ENCODE measurements at regions of chr12 and their contacts with region 1.

Region 1: GRCh38 chr12:50167041-50167828 is at the start of gene CERS5:
- DNase-seq: peak; percentile 92 to 98 (median 96)
- ATAC-seq: peak; percentile 95
- H3K4me3 ChIP-seq: peak within 1 kb of the TSS; percentile 85 to 90
- H3K4me3 Mint-ChIP-seq: peak within 1 kb of the TSS; percentile 92
- H3K27ac ChIP-seq: peak within 1 kb of the TSS; percentile 88 to 93
- H3K27ac Mint-ChIP-seq: peak within 1 kb of the TSS; percentile 95
- H3K4me1 ChIP-seq: peaks cover 15% of the 10 kb centered on the region
- H3K4me1 Mint-ChIP-seq: peaks cover 29% of the 10 kb centered on the region
- H3K27me3 ChIP-seq: no peaks in the 10 kb centered on the region
- H3K27me3 Mint-ChIP-seq: no peaks in the 10 kb centered on the region
- CTCF ChIP-seq: no peak
- total RNA-seq, gene CERS5: 45.2 to 46.2 TPM

Region 2: DNA sequence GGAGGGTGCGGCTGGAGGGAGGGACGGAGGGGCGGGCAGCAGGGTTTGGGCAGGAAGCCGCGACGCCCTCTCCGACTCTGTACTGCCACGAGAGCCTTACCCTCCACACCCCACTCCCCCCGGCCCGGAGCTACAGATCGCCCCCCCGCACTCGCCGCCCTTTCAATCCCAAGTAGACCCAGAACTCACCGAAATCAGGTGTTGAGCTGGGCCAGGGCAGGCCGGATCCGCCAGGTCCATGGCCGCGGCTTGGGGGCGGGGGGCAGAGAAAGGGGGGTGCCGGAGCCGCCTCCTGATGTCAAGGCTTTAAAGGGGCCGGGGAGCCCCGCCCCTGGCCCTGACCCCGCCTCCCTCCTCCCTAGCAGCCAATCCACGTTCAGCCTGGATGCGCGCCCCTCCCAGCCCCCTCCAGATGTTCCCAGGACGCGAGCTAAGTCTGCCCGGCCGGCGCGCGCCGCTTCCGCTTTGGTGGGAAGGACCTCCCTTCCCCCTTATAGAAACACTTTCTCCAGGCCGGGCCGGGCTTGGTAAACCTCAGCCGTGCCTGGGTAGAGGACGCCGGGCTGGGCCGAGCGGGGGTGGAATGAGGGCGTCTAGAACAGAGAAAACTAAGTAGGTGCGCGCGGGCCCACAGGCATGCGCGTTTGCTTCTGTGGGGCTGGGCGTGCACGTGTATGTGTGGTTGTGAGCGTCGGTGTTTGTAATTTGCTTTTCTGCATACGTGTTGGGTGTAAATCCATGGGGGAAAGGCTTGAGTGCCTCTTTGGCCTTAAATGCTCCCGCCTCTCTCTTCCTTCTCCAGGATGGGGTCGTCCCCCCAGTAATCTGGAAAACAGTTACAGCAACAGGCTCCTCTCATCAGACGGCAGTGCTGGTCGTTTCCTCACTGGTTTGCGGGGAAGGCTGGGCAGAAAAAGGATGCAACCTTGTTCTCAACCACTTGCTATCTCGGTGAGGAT is 338.8 kb before region 1 on chr12 and contains the start of gene NCKAP5L:
- CTCF ChIA-PET with region 1: no interaction called
- POLR2A ChIA-PET with region 1: no interaction called
- intact Hi-C with region 1: loop called in 1 of 2 experiments (anchors 2 kb)
- DNase-seq: peak; percentile 86 to 96 (median 94)
- ATAC-seq: peak; percentile 97
- H3K4me3 ChIP-seq: peak within 1 kb of the TSS; percentile 68 to 91
- H3K4me3 Mint-ChIP-seq: peak within 1 kb of the TSS; percentile 97
- H3K27ac ChIP-seq: peak within 1 kb of the TSS; percentile 65 to 69
- H3K27ac Mint-ChIP-seq: peak within 1 kb of the TSS; percentile 97
- H3K4me1 ChIP-seq: peaks cover 15% of the 10 kb centered on the region
- H3K4me1 Mint-ChIP-seq: peaks cover 39% of the 10 kb centered on the region
- H3K27me3 ChIP-seq: no peaks in the 10 kb centered on the region
- H3K27me3 Mint-ChIP-seq: no peaks in the 10 kb centered on the region
- CTCF ChIP-seq: no peak
- total RNA-seq, gene NCKAP5L: 10.6 to 10.7 TPM

Region 3: DNA sequence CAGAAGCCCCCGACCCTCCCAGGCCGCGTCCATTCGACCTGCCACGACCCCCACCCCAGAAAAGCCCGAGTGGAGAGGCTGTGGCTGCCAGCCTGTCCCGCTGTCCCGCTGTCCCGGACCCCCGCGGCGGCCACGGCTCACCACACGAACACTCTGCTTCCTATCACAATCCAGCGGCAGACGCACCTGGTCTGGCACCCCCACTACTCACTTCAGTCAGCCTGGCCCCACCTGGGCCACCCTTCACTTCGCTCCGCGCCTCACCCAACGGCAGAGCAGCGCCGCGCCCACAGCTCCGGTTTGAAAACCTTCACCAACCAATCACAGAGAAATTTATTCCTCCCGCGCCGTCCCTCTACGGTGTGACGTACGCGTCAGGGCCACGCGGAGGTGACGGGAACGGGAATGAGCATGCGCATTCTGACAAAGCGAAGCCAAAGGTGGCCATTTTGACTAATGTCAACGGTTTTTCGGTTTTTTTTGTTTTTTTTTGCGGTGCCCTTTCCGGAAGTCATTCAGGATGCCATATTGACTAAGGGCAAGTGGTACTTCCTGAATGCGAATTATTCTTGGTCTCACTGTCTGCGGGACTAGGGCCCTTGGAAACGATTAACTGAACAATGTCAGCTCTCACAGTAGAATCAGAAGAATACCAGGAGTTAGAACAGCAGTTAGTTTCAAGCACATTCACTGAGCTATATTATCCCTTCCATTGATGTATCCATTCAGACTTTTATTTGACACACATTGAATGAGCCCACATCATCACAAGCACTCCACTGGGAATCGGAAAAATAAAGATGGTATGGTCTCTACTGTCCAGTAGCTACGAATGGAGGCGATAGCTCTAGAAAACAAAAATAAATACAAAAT is 141.8 kb before region 1 on chr12 and contains the start of gene RACGAP1:
- CTCF ChIA-PET with region 1: interaction called, 3 read pairs
- POLR2A ChIA-PET with region 1: no interaction called
- intact Hi-C with region 1: loop called in 1 of 2 experiments (anchors 1 kb)
- DNase-seq: peak; percentile 88 to 99 (median 94)
- ATAC-seq: peak; percentile 97
- H3K4me3 ChIP-seq: peak within 1 kb of the TSS; percentile 62 to 78
- H3K4me3 Mint-ChIP-seq: peak within 1 kb of the TSS; percentile 98
- H3K27ac ChIP-seq: peak within 1 kb of the TSS; percentile 38 to 63
- H3K27ac Mint-ChIP-seq: peak within 1 kb of the TSS; percentile 86
- H3K4me1 ChIP-seq: no peaks in the 10 kb centered on the region
- H3K4me1 Mint-ChIP-seq: peaks cover 16% of the 10 kb centered on the region
- H3K27me3 ChIP-seq: no peaks in the 10 kb centered on the region
- H3K27me3 Mint-ChIP-seq: no peaks in the 10 kb centered on the region
- CTCF ChIP-seq: no peak
- total RNA-seq, gene RACGAP1: 2.2 to 2.8 TPM

Region 4: GRCh38 chr12:50142993-50143392 is 24.2 kb before region 1 on chr12:
- CTCF ChIA-PET with region 1: no interaction called
- POLR2A ChIA-PET with region 1: no interaction called
- intact Hi-C with region 1: no loop called
- DNase-seq: no peak
- ATAC-seq: no peak
- H3K4me3 ChIP-seq: no peak overlapping the region
- H3K4me3 Mint-ChIP-seq: no peak overlapping the region
- H3K27ac ChIP-seq: no peak overlapping the region
- H3K27ac Mint-ChIP-seq: no peak overlapping the region
- H3K4me1 ChIP-seq: no peaks in the 10 kb centered on the region
- H3K4me1 Mint-ChIP-seq: peaks cover 6% of the 10 kb centered on the region
- H3K27me3 ChIP-seq: no peaks in the 10 kb centered on the region
- H3K27me3 Mint-ChIP-seq: no peaks in the 10 kb centered on the region
- CTCF ChIP-seq: no peak

Measured in CD8-positive, alpha-beta T cell (primary cell).